ENCODE measurements at regions of chr1 and their contacts with region 1.

Region 1: GRCh38 chr1:11907275-11908094 is 18.7 kb downstream of the KIAA2013 start:
- DNase-seq: peak; percentile 94
- H3K4me3 Mint-ChIP-seq: peak overlapping the region; percentile 89
- H3K27ac Mint-ChIP-seq: peak overlapping the region; percentile 100
- H3K4me1 Mint-ChIP-seq: peaks cover 5% of the 10 kb centered on the region
- H3K27me3 Mint-ChIP-seq: no peaks in the 10 kb centered on the region
- CTCF ChIP-seq: peak; percentile 65

Region 2: GRCh38 chr1:11805447-11806306 is 101.8 kb before region 1 on chr1 and contains the starts of genes CLCN6 and MTHFR:
- CTCF ChIA-PET with region 1: interaction called, 5 read pairs
- POLR2A ChIA-PET with region 1: interaction called, 55 read pairs
- intact Hi-C with region 1: no loop called
- DNase-seq: peak; percentile 99
- H3K4me3 Mint-ChIP-seq: peak within 1 kb of the TSS; percentile 95
- H3K27ac Mint-ChIP-seq: peak within 1 kb of the TSS; percentile 96
- H3K4me1 Mint-ChIP-seq: peaks cover 34% of the 10 kb centered on the region
- H3K27me3 Mint-ChIP-seq: no peaks in the 10 kb centered on the region
- CTCF ChIP-seq: no peak
- total RNA-seq, gene CLCN6: 12.3 and 24.7 TPM in 2 replicates
- total RNA-seq, gene MTHFR: 14.0 and 17.8 TPM in 2 replicates

Region 3: GRCh38 chr1:11918779-11919519 is 11.5 kb after region 1 on chr1:
- CTCF ChIA-PET with region 1: interaction called, 5 read pairs
- POLR2A ChIA-PET with region 1: interaction called, 123 read pairs
- intact Hi-C with region 1: no loop called
- DNase-seq: peak; percentile 74
- H3K4me3 Mint-ChIP-seq: no peak overlapping the region
- H3K27ac Mint-ChIP-seq: no peak overlapping the region
- H3K4me1 Mint-ChIP-seq: peaks cover 30% of the 10 kb centered on the region
- H3K27me3 Mint-ChIP-seq: no peaks in the 10 kb centered on the region
- CTCF ChIP-seq: no peak

Region 4: GRCh38 chr1:11967028-11967547 is 59.6 kb after region 1 on chr1:
- CTCF ChIA-PET with region 1: interaction called, 4 read pairs
- POLR2A ChIA-PET with region 1: interaction called, 43 read pairs
- intact Hi-C with region 1: loop called (anchors 1 kb)
- DNase-seq: peak; percentile 79
- H3K4me3 Mint-ChIP-seq: peak overlapping the region; percentile 40
- H3K27ac Mint-ChIP-seq: peak overlapping the region; percentile 23
- H3K4me1 Mint-ChIP-seq: no peaks in the 10 kb centered on the region
- H3K27me3 Mint-ChIP-seq: no peaks in the 10 kb centered on the region
- CTCF ChIP-seq: peak; percentile 65

Region 5: GRCh38 chr1:12031039-12031980 is 123.8 kb after region 1 on chr1:
- CTCF ChIA-PET with region 1: interaction called, 4 read pairs
- POLR2A ChIA-PET with region 1: interaction called, 6 read pairs
- intact Hi-C with region 1: loop called (anchors 1 kb)
- DNase-seq: peak; percentile 40
- H3K4me3 Mint-ChIP-seq: no peak overlapping the region
- H3K27ac Mint-ChIP-seq: no peak overlapping the region
- H3K4me1 Mint-ChIP-seq: no peaks in the 10 kb centered on the region
- H3K27me3 Mint-ChIP-seq: no peaks in the 10 kb centered on the region
- CTCF ChIP-seq: peak; percentile 56